Naive thymus-derived CD4-positive, alpha-beta T cell (primary cell): ENCODE measurements at regions of chr6 and their contacts with region 1.

Region 1: DNA sequence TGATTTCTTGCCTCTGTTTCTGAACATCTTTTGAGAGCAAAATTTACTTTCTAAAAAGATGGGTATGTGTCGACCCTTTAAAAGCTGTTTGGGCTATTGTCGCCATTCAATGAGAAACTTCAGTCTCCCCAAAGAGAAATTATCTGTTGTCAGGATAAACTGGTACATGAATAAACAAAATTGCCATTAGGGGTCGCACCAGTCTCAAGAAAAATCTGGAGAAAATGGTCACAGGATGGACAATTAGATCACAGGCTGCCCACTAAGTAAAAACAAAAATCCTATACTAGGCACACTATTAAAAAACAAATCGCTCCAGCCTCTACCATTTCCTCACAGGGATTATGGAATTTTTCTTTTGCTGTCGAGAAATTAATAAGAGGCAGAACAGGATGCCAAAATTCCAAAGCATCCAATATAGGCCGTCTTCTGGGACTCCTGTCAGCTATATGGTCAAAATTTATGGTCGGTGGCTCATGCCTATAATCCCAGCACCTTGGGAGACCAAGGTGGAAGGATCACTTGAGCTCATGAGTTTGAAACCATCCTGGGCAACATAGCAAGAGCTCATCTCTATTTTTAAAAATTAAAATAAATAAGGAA is 5.5 kb upstream of the HLA-E start:
- DNase-seq: peak in 4 of 9 donors; percentile 42 to 56 (median 54)
- ATAC-seq: no peak
- H3K4me3 ChIP-seq: no peak overlapping the region
- H3K4me3 Mint-ChIP-seq: no peak overlapping the region
- H3K27ac ChIP-seq: no peak overlapping the region
- H3K27ac Mint-ChIP-seq: peak overlapping the region in 1 of 9 donors; percentile 7
- H3K4me1 ChIP-seq: peaks cover 21 to 23% of the 10 kb centered on the region in 2 donors
- H3K4me1 Mint-ChIP-seq: peaks cover 19 to 49% (median 39%) of the 10 kb centered on the region in 7 donors
- H3K27me3 ChIP-seq: peaks cover 8 to 23% of the 10 kb centered on the region in 2 donors
- H3K27me3 Mint-ChIP-seq: peaks cover 26 to 52% (median 30%) of the 10 kb centered on the region in 5 donors

Region 2: GRCh38 chr6:30463651-30464618 is 19.8 kb before region 1 on chr6:
- CTCF ChIA-PET with region 1: interaction called, 13 read pairs
- POLR2A ChIA-PET with region 1: no interaction called
- intact Hi-C with region 1: loop called in 1 of 2 experiments (anchors 2 kb)
- DNase-seq: peak in 8 of 9 donors; percentile 26 to 61 (median 44)
- ATAC-seq: peak; percentile 78
- H3K4me3 ChIP-seq: peak overlapping the region; percentile 22
- H3K4me3 Mint-ChIP-seq: peak overlapping the region in 8 of 10 donors; percentile 30 to 94 (median 47)
- H3K27ac ChIP-seq: no peak overlapping the region
- H3K27ac Mint-ChIP-seq: no peak overlapping the region
- H3K4me1 ChIP-seq: peaks cover 39 to 52% of the 10 kb centered on the region in 2 donors
- H3K4me1 Mint-ChIP-seq: peaks cover 20 to 53% (median 44%) of the 10 kb centered on the region in 7 donors
- H3K27me3 ChIP-seq: peaks cover 52% of the 10 kb centered on the region in 2 donors
- H3K27me3 Mint-ChIP-seq: peaks cover 82 to 91% (median 86%) of the 10 kb centered on the region in 5 donors

Region 3: GRCh38 chr6:30571075-30571768 is 87.4 kb after region 1 on chr6 and contains the start of gene ABCF1:
- CTCF ChIA-PET with region 1: interaction called, 11 read pairs
- POLR2A ChIA-PET with region 1: interaction called, 5 read pairs
- intact Hi-C with region 1: no loop called
- DNase-seq: peak; percentile 98 to 100 (median 99)
- ATAC-seq: peak; percentile 99
- H3K4me3 ChIP-seq: peak within 1 kb of the TSS; percentile 94
- H3K4me3 Mint-ChIP-seq: peak within 1 kb of the TSS; percentile 94 to 100 (median 98)
- H3K27ac ChIP-seq: peak within 1 kb of the TSS; percentile 98
- H3K27ac Mint-ChIP-seq: peak within 1 kb of the TSS; percentile 96 to 100 (median 99)
- H3K4me1 ChIP-seq: peaks cover 33 to 38% of the 10 kb centered on the region in 2 donors
- H3K4me1 Mint-ChIP-seq: peaks cover 55 to 79% (median 64%) of the 10 kb centered on the region in 7 donors
- H3K27me3 ChIP-seq: no peaks in the 10 kb centered on the region
- H3K27me3 Mint-ChIP-seq: peaks cover 0 to 4% (median 0%) of the 10 kb centered on the region in 5 donors
- total RNA-seq, gene ABCF1: 65.1 to 116 (median 86.6) TPM

Region 4: DNA sequence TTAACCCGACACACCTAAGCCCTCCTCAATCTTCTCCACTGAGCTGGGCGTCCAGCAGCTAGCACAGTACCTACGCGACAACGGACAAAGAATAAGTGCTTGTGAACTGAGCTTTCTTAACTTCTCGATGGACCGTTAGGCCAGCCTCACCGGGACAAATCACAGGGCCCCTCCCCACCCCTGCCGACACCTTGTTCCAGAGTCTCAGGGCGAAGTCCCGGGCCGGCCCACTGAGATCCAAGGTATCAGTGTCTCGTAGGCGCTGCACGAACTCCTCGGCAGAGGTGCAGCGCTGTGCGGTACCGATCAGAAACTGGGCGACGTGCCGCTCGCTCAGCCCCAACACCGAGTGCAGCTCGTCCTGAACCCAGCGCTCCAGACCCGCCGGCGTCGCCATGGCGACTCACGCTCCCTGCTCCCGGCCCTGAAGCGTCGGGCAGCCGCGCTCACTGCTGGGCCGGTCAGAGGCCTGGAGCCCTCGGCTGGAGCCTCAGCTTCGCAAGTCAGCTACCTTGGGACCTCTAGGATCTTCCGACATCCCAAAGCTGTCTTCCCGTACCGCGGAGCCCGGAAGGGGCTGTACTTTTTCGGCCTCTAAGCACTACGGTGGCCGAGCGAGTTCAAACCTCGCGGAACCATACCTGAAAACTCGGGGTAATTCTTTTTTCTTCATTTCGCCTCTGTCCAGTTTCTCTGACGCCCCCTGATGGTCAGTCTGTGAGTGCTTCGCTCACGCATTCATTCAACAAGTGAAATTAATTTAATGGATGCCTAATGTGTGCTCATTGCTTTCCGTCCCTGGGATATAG is 188.9 kb after region 1 on chr6 and contains the start of gene DHX16:
- CTCF ChIA-PET with region 1: interaction called, 11 read pairs
- POLR2A ChIA-PET with region 1: interaction called, 3 read pairs
- intact Hi-C with region 1: loop called (anchors 1 kb)
- DNase-seq: peak; percentile 65 to 85 (median 83)
- ATAC-seq: peak; percentile 93
- H3K4me3 ChIP-seq: peak within 1 kb of the TSS; percentile 74
- H3K4me3 Mint-ChIP-seq: peak within 1 kb of the TSS; percentile 87 to 94 (median 91)
- H3K27ac ChIP-seq: peak within 1 kb of the TSS; percentile 77
- H3K27ac Mint-ChIP-seq: peak within 1 kb of the TSS; percentile 70 to 93 (median 91)
- H3K4me1 ChIP-seq: peaks cover 8 to 15% of the 10 kb centered on the region in 2 donors
- H3K4me1 Mint-ChIP-seq: peaks cover 28 to 46% (median 43%) of the 10 kb centered on the region in 7 donors
- H3K27me3 ChIP-seq: no peaks in the 10 kb centered on the region
- H3K27me3 Mint-ChIP-seq: no peaks in the 10 kb centered on the region
- total RNA-seq, gene DHX16: 25.9 to 51.5 (median 46.7) TPM

Region 5: DNA sequence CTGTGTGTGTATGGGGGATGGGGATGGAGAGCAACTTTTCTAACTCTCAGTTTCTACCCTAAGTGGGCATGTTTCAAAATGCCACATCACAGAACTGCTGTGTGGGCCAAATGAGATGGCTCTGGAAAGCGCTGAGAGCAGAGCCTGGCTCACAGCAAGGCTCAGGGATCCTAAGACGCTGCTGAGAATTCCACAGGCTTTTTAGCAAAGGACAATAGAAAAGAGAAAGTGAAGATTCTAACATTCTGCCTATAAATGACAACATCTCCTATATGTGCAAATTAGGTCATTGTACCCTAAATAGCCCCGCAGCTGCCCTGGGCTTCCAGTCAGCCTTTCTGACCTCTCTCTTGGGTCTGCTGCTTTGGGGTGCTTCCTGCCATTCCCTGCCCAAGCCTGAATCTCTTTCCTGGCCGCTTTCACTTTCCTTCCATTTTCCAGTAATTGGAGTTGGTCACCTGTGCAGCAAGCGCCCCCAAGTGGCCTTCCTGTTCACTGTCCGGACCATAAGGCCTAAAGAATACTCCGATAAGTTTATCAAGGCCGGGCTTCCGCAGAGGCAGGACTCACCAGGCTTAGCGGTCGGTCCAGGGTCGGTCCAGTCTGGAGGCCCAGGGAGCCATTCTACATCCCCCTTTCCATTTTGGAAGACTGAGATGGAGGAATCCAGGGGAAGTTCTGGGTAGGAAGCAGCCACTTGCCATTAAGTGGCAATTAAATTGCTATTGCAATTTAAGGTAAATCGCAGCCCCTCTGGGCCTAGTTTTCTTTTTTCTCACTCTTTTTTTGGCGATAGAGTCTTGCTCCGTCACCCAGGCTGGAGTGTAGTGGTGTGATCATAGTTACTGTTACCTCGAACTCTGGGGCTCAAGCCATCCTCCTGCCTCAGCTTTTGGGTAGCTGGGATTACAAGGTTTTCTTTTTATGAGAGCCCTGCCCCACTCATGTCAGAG is 393.9 kb after region 1 on chr6:
- CTCF ChIA-PET with region 1: no interaction called
- POLR2A ChIA-PET with region 1: no interaction called
- intact Hi-C with region 1: loop called in 1 of 2 experiments (anchors 5 kb)
- DNase-seq: peak; percentile 52 to 72 (median 63)
- ATAC-seq: peak; percentile 93
- H3K4me3 ChIP-seq: peak overlapping the region; percentile 40
- H3K4me3 Mint-ChIP-seq: peak overlapping the region; percentile 69 to 90 (median 86)
- H3K27ac ChIP-seq: peak overlapping the region; percentile 50
- H3K27ac Mint-ChIP-seq: peak overlapping the region; percentile 44 to 91 (median 84)
- H3K4me1 ChIP-seq: peaks cover 8 to 15% of the 10 kb centered on the region in 2 donors
- H3K4me1 Mint-ChIP-seq: peaks cover 10 to 31% (median 19%) of the 10 kb centered on the region in 7 donors
- H3K27me3 ChIP-seq: no peaks in the 10 kb centered on the region
- H3K27me3 Mint-ChIP-seq: peaks cover 0 to 7% (median 0%) of the 10 kb centered on the region in 5 donors